ENCODE measurements at regions of chr15 and their contacts with region 1.

Region 1: DNA sequence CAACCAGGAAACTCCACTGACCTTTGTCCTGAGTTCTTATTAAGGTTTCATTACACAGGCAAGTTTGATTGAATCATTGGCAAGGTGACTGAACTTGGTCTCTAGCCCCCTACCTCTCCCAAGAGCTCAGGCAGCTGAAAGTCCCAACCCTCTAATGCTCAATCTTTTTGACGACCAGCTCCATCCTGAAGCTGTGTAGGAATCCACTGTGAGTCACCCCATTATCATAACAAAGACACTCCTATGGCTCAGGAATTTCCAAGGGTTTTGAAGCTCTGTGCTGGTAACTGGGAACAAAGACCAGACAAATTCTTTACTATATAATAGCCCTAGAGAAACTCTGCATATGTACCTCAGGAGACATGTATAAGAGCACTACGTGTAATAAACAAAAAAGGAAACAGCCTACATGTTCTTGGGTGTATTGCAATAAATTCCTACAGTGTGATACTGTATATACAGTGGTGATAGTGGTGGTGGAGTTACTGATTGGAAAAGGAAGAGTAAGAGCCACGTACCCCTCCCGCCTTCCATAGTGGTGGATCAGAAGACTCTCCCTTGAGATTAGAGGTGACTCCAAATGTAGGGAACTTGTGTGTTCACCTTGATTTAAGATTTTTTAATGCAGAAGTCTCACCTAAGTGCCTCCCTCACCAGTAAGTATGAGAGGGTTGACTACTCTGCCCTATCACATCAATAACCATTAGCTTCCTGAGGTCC is 116.6 kb downstream of the ST8SIA2 start:
- DNase-seq: no peak
- ATAC-seq: no peak
- H3K4me3 Mint-ChIP-seq: no peak overlapping the region
- H3K27ac Mint-ChIP-seq: no peak overlapping the region
- H3K4me1 Mint-ChIP-seq: peaks cover 6% of the 10 kb centered on the region
- H3K27me3 Mint-ChIP-seq: peaks cover 3% of the 10 kb centered on the region

Region 2: DNA sequence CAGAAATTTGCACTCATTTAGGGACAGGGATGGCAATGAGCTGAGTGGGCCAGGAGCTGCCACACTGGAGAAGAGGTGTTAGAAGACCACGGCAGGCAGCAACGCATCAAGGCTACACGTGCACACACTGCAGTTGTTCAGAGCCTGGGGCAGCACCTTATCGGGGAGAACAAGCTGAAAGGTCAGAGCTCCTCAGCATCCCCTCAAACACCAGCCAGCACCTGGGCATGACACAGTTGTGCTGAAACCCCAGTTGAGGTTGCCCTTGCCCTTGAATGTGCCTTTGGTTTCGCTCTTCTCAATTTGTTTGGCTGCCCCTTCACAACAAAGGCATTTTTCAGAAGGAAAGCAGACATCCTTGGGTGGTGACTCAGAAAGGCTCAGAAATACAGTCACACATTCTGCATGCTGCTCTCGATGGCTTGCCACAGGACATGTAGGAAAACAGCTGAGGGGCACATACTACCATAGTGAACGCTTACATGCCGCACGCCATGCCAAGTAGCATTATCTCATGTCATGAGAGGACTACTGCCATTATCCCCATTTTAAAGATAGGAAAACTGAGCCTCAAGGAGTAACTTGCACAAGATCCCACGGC is 59.0 kb before region 1 on chr15:
- CTCF ChIA-PET with region 1: no interaction called
- POLR2A ChIA-PET with region 1: no interaction called
- intact Hi-C with region 1: loop called in 1 of 2 experiments (anchors 10 kb)
- DNase-seq: no peak
- ATAC-seq: no peak
- H3K4me3 Mint-ChIP-seq: no peak overlapping the region
- H3K27ac Mint-ChIP-seq: no peak overlapping the region
- H3K4me1 Mint-ChIP-seq: no peaks in the 10 kb centered on the region
- H3K27me3 Mint-ChIP-seq: peaks cover 3% of the 10 kb centered on the region

Region 3: GRCh38 chr15:92463826-92464225 is 46.5 kb before region 1 on chr15:
- CTCF ChIA-PET with region 1: no interaction called
- POLR2A ChIA-PET with region 1: no interaction called
- intact Hi-C with region 1: loop called (anchors 1 to 10 kb)
- DNase-seq: no peak
- ATAC-seq: no peak
- H3K4me3 Mint-ChIP-seq: no peak overlapping the region
- H3K27ac Mint-ChIP-seq: no peak overlapping the region
- H3K4me1 Mint-ChIP-seq: no peaks in the 10 kb centered on the region
- H3K27me3 Mint-ChIP-seq: no peaks in the 10 kb centered on the region

Measured in activated CD4-positive, alpha-beta T cell treated with anti-CD3 and anti-CD28 coated beads for 36 hours (primary cell).